ENCODE measurements at regions of chr9 and their contacts with region 1.

Region 1: GRCh38 chr9:4679268-4680172 is at the start of gene CDC37L1:
- DNase-seq: peak; percentile 98
- H3K4me3 ChIP-seq: peak within 1 kb of the TSS; percentile 69 to 84 (median 75)
- H3K27ac ChIP-seq: peak within 1 kb of the TSS; percentile 71
- H3K4me1 ChIP-seq: peaks cover 6% of the 10 kb centered on the region
- H3K27me3 ChIP-seq: no peaks in the 10 kb centered on the region
- CTCF ChIP-seq: peak; percentile 60 to 78
- POLR2A ChIP-seq: peak; percentile 98
- total RNA-seq, gene CDC37L1: 6.8 and 8.9 TPM in 2 replicates

Region 2: GRCh38 chr9:4662108-4662988 is 17.2 kb before region 1 on chr9 and contains the start of gene PLPP6:
- CTCF ChIA-PET with region 1: interaction called, 14 read pairs
- POLR2A ChIA-PET with region 1: interaction called, 5 read pairs
- dilution Hi-C with region 1: no loop called
- intact Hi-C with region 1: loop called (anchors 1 kb)
- DNase-seq: peak; percentile 76
- H3K4me3 ChIP-seq: peak within 1 kb of the TSS; percentile 57 to 81 (median 71)
- H3K27ac ChIP-seq: peak within 1 kb of the TSS; percentile 10
- H3K4me1 ChIP-seq: peaks cover 32% of the 10 kb centered on the region
- H3K27me3 ChIP-seq: no peaks in the 10 kb centered on the region
- CTCF ChIP-seq: peak; percentile 18 to 57
- POLR2A ChIP-seq: peak; percentile 74
- total RNA-seq, gene PLPP6: 5.4 and 6.4 TPM in 2 replicates

Region 3: GRCh38 chr9:4760122-4760521 is 80.6 kb after region 1 on chr9:
- CTCF ChIA-PET with region 1: no interaction called
- POLR2A ChIA-PET with region 1: no interaction called
- dilution Hi-C with region 1: no loop called
- intact Hi-C with region 1: no loop called
- DNase-seq: no peak
- H3K4me3 ChIP-seq: no peak overlapping the region
- H3K27ac ChIP-seq: no peak overlapping the region
- H3K4me1 ChIP-seq: peaks cover 13% of the 10 kb centered on the region
- H3K27me3 ChIP-seq: no peaks in the 10 kb centered on the region
- CTCF ChIP-seq: no peak
- POLR2A ChIP-seq: no peak

Region 4: DNA sequence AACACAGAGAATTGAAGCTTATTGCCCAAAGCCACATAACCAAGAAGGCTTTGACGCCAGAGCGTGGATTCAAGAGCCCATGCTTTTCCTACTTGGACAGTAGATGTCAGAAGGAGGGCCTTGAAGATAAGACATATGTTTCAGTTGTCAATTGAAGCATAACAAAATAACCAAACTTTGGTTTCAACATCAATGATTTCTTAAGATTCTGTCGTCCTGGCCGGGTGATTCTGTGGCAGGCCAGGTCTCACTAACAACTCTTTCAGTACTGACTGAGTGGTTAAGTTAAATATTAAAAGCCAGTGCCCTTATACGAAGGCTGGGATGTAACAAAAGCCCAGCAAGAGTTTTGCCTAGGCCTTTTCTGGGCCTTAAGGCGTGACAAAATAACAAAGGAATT is 207.2 kb after region 1 on chr9:
- CTCF ChIA-PET with region 1: no interaction called
- POLR2A ChIA-PET with region 1: no interaction called
- dilution Hi-C with region 1: no loop called
- intact Hi-C with region 1: no loop called
- DNase-seq: no peak
- H3K4me3 ChIP-seq: no peak overlapping the region
- H3K27ac ChIP-seq: no peak overlapping the region
- H3K4me1 ChIP-seq: no peaks in the 10 kb centered on the region
- H3K27me3 ChIP-seq: no peaks in the 10 kb centered on the region
- CTCF ChIP-seq: no peak
- POLR2A ChIP-seq: no peak

Measured in endothelial cell of umbilical vein (primary cell).